ENCODE measurements at regions of chr3 and their contacts with region 1.

Region 1: DNA sequence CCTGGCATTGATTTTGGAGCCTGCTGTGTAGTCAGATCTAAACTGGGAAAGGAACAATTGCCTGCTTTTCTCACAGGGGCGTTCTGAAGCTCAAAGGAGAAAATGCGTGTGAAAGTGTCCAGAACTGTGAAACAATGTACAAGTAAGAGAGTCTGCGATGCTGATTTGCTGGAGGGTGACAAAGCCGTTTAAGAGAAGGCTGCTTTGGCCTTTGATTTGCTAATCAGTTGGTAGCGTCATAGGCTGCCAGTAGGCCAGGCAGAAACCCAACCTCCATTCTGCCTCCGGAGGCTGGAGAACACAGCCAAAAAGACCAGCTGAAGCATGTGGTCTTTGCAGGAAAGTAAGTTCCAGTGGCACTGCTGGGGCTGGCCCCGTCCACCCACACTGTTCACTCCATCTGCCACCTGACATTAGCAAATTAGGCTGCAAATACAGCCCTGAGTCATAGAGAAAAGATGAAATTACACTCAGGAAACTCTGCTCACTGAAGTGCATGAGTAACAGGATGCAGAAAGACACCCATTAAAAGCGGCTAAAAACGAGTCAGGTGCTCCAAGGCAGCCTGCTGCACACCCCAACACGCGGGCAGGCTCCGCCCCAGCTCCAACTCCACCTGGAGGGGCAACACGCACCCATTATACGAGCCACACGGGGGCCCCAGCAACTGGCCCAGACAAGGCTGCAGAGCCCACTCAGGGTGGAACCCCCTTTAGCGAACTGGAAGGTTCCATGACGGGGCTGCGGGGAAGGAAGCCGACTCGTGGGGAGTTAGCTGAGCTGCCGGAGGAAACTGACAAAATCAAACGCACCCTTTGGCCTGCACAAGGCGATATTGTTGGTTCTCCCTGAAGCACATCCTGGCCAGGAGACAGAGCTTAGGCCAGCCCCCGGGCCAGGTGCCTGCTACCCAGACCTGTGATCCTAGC is 31.6 kb downstream of the ZDHHC19 start:
- DNase-seq: peak; percentile 83 to 94 (median 85)
- H3K4me3 ChIP-seq: peak overlapping the region in 1 of 2 donors; percentile 34
- H3K4me3 Mint-ChIP-seq: peak overlapping the region; percentile 46 to 85 (median 78)
- H3K27ac ChIP-seq: peak overlapping the region; percentile 61
- H3K27ac Mint-ChIP-seq: peak overlapping the region; percentile 91 to 99 (median 98)
- H3K4me1 ChIP-seq: peaks cover 66% of the 10 kb centered on the region
- H3K4me1 Mint-ChIP-seq: peaks cover 34 to 64% (median 47%) of the 10 kb centered on the region in 4 donors
- H3K27me3 ChIP-seq: no peaks in the 10 kb centered on the region
- H3K27me3 Mint-ChIP-seq: no peaks in the 10 kb centered on the region

Region 2: DNA sequence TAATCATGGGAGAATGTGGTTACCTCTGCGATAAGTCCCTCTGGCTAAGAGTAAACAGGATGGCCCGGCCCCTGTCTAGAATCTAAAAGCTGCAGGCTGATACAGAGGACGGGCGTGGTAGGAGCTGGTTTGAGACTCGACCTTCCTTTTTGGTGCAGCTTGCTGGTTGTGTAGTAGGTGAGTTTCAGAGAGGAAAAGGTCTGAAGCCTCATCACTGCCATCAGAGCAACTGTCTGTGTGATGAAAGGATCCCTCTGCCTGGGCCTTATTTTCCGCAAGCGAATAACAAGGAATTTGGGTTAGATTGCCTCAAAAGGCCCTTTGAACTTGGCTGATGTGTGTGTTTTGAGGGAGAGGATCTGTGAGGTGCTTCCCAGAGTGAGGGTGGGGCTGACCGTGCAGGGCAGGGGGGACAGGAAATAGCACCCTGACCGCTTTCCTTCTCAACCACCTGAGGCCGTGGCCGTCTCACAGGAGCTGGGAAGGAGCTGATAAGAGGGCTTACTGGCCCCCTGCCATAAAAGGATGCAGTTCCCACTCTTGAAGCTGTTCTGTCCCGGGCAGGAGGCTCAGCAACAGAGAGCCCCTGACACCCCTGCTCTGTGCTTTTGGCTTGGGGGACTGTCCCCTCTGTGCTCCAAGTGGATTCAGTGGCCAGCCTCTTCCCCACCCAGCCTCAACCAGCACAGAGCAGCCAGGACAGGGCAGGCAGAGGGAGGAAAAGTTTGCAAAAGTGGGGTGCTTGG is 52.2 kb before region 1 on chr3:
- CTCF ChIA-PET with region 1: interaction called, 3 read pairs
- POLR2A ChIA-PET with region 1: interaction called, 11 read pairs
- intact Hi-C with region 1: no loop called
- DNase-seq: peak; percentile 4 to 46 (median 23)
- H3K4me3 ChIP-seq: no peak overlapping the region
- H3K4me3 Mint-ChIP-seq: peak overlapping the region in 7 of 8 donors; percentile 32 to 79 (median 57)
- H3K27ac ChIP-seq: peak overlapping the region; percentile 32
- H3K27ac Mint-ChIP-seq: peak overlapping the region; percentile 47 to 91 (median 87)
- H3K4me1 ChIP-seq: peaks cover 15% of the 10 kb centered on the region
- H3K4me1 Mint-ChIP-seq: peaks cover 14 to 33% (median 22%) of the 10 kb centered on the region in 4 donors
- H3K27me3 ChIP-seq: no peaks in the 10 kb centered on the region
- H3K27me3 Mint-ChIP-seq: no peaks in the 10 kb centered on the region

Region 3: DNA sequence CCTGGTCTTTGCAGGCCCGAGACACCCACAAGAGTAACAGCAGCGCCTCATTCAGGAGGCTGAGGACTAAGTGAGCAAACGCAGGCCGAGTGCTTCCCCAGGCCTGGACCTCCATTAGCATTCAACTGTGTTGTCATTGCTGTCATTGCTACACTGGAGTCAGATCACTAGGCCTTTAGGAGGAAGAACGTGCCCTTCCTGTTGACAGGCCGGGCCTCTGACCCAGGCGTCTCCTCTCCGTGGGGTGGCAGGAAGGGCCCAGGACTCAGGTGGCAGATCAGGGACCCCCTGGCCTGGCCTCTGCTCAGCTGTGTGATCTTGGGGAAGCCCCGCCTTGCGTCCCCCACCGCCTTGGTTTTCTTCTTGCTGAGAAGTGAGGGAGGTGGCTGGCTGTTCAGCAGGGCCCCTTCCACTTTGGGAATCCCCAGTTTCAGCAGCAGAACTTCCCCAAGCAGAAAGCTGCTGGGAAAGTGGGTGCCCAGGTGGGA is 12.4 kb after region 1 on chr3:
- CTCF ChIA-PET with region 1: interaction called, 12 read pairs
- POLR2A ChIA-PET with region 1: interaction called, 70 read pairs
- intact Hi-C with region 1: loop called (anchors 1 kb)
- DNase-seq: peak; percentile 47 to 83 (median 59)
- H3K4me3 ChIP-seq: peak overlapping the region in 1 of 2 donors; percentile 34
- H3K4me3 Mint-ChIP-seq: peak overlapping the region in 7 of 8 donors; percentile 33 to 85 (median 66)
- H3K27ac ChIP-seq: peak overlapping the region; percentile 75
- H3K27ac Mint-ChIP-seq: peak overlapping the region; percentile 95 to 99 (median 97)
- H3K4me1 ChIP-seq: peaks cover 47% of the 10 kb centered on the region
- H3K4me1 Mint-ChIP-seq: peaks cover 14 to 54% (median 22%) of the 10 kb centered on the region in 4 donors
- H3K27me3 ChIP-seq: no peaks in the 10 kb centered on the region
- H3K27me3 Mint-ChIP-seq: no peaks in the 10 kb centered on the region

Measured in CD4-positive, alpha-beta memory T cell (primary cell).